A549 (cell line): ENCODE measurements at regions of chrX and their contacts with region 1.

Region 1: GRCh38 chrX:148784856-148785255 is 284.4 kb downstream of the AFF2 start:
- DNase-seq: no peak
- ATAC-seq: no peak
- H3K4me3 ChIP-seq: no peak overlapping the region
- H3K27ac ChIP-seq: no peak overlapping the region
- H3K4me1 ChIP-seq: no peaks in the 10 kb centered on the region
- CTCF ChIP-seq: no peak
- EP300 ChIP-seq: no peak
- POLR2A ChIP-seq: no peak
- RAD21 ChIP-seq: no peak

Region 2: DNA sequence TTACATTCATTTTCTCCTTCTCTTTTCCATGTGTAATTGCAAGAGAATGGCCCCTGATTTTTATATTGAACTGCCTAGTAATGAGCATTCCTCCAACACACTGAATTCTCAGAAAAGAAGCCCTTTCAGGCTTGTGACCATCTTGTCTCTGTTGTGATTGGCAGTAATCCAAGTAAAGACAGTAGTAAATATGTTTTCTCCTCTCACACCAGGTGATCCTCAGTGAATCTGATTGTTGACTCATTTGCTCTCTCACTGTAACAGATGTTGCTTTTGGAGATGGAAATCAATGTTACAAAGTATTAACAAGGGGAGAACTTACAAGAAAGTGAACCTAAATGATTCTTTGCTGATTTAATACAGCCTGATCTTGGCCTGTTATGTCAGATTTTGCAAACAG is 13.4 kb before region 1 on chrX:
- CTCF ChIA-PET with region 1: no interaction called
- POLR2A ChIA-PET with region 1: interaction called, 10 read pairs
- DNase-seq: no peak
- ATAC-seq: no peak
- H3K4me3 ChIP-seq: no peak overlapping the region
- H3K27ac ChIP-seq: no peak overlapping the region
- H3K4me1 ChIP-seq: no peaks in the 10 kb centered on the region
- CTCF ChIP-seq: no peak
- EP300 ChIP-seq: no peak
- POLR2A ChIP-seq: no peak
- RAD21 ChIP-seq: no peak

Region 3: DNA sequence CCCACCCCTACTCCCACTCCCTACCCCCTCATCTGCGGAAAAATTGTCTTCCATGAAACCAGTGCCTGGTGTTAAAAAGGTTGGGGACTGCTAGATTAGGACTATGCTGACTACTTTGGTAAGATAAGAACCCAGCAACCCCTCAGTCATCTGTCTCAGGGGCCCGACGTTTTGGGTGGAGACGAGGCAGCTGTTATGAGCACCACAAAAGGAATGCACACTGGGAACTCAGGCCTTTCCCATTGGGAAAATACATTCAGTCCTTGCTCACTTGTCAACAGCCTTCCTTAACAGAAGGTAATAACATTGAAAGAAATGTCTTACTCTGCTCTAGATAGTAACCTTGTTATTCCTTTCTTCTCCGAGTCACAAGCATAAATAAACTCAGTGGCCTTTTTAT is 26.4 kb after region 1 on chrX:
- CTCF ChIA-PET with region 1: no interaction called
- POLR2A ChIA-PET with region 1: no interaction called
- DNase-seq: no peak
- ATAC-seq: no peak
- H3K4me3 ChIP-seq: no peak overlapping the region
- H3K27ac ChIP-seq: no peak overlapping the region
- H3K4me1 ChIP-seq: no peaks in the 10 kb centered on the region
- CTCF ChIP-seq: no peak
- EP300 ChIP-seq: no peak
- POLR2A ChIP-seq: no peak
- RAD21 ChIP-seq: no peak

Region 4: DNA sequence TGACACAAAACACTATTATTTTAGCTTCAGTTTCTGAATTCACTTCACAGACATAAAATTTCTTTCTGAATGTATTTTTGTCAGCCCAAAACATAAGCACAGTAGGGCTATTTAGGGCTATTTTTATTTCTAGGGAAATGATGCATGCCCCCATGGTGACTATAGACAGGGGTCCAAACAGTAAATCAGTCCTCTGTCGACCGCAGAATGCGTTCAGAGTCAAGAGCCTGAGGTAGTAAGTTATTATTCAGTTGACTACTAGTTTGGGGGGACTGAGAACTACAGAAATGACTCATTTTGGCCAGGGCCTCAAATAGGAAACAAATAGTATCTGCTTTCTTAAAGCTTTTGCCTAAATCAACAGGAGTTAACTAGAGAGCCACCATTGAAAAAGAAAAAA is 129.9 kb after region 1 on chrX:
- CTCF ChIA-PET with region 1: no interaction called
- POLR2A ChIA-PET with region 1: no interaction called
- DNase-seq: no peak
- ATAC-seq: no peak
- H3K4me3 ChIP-seq: no peak overlapping the region
- H3K27ac ChIP-seq: no peak overlapping the region
- H3K4me1 ChIP-seq: no peaks in the 10 kb centered on the region
- CTCF ChIP-seq: no peak
- EP300 ChIP-seq: no peak
- POLR2A ChIP-seq: no peak
- RAD21 ChIP-seq: no peak